ENCODE measurements at regions of chr6 and their contacts with region 1.

Region 1: GRCh38 chr6:53492860-53493634 is 51.9 kb downstream of the GCLC start:
- DNase-seq: no peak
- H3K4me3 Mint-ChIP-seq: no peak overlapping the region
- H3K27ac Mint-ChIP-seq: peak overlapping the region; percentile 65
- H3K4me1 Mint-ChIP-seq: peaks cover 21% of the 10 kb centered on the region
- H3K27me3 Mint-ChIP-seq: peaks cover 5% of the 10 kb centered on the region

Region 2: GRCh38 chr6:52802806-52803205 is 690.2 kb before region 1 on chr6:
- intact Hi-C with region 1: no loop called
- DNase-seq: no peak
- H3K4me3 Mint-ChIP-seq: no peak overlapping the region
- H3K27ac Mint-ChIP-seq: no peak overlapping the region
- H3K4me1 Mint-ChIP-seq: no peaks in the 10 kb centered on the region
- H3K27me3 Mint-ChIP-seq: peaks cover 18% of the 10 kb centered on the region

Region 3: DNA sequence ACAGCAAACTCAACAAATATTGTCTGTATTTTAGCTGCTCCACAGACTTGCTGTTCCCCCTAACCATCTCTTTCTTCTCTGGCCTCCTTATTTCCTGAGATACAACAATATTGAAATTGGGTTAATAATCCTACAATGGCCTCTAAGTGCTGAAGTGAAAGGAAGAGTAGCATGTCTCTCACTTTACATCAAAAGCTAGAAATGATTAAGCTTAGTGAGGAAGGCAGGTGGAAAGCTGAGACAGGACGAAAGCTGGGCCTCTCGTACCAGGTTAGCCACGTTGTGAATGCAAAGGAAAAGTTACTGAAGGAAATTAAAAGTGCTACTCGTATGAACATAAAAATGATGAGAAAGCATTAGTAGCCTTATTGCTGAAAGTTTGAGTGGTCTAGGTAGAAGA is 208.1 kb before region 1 on chr6:
- intact Hi-C with region 1: no loop called
- DNase-seq: no peak
- H3K4me3 Mint-ChIP-seq: no peak overlapping the region
- H3K27ac Mint-ChIP-seq: peak overlapping the region; percentile 31
- H3K4me1 Mint-ChIP-seq: peaks cover 30% of the 10 kb centered on the region
- H3K27me3 Mint-ChIP-seq: no peaks in the 10 kb centered on the region

Region 4: DNA sequence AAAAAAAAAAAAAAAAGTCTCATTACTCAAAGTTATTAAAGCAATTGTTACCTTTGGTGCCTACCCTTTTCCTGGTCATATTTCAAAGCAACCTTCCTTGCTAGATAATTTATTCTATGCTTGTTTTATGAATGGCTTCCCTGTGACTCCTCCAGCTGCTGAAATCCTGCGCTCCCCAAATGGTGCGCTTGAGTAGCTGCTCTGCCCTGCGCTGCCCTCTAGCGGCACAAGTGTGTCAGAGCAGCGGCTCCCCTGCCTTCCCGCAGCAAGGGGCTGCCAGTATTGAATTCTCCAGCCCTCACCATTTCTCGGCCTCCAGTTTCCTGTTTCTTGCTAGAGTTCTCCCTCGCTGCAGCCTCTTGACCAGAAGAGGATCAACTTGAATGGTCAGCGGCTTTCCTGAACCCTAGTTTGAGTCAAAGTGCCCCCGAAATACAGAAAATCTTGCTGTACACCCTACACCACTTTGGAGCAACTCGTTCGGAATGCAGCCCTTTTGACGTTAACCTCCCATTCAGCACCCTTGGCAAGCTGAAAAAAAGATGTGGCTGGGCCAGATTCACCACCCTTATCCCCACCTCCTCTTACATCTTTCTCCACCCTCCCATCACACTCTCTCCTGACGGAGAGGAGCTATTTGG is 232.9 kb after region 1 on chr6:
- intact Hi-C with region 1: loop called (anchors 1 kb)
- DNase-seq: peak; percentile 56
- H3K4me3 Mint-ChIP-seq: no peak overlapping the region
- H3K27ac Mint-ChIP-seq: no peak overlapping the region
- H3K4me1 Mint-ChIP-seq: peaks cover 6% of the 10 kb centered on the region
- H3K27me3 Mint-ChIP-seq: peaks cover 24% of the 10 kb centered on the region

Measured in activated T-helper 2 cell treated with anti-CD3 and anti-CD28 coated beads, Interferon-gamma antibody, Interleukin-2, Interleukin-4, amounts not matched to agents 10 μg/mL and 5 μg/mL and 100 μg/mL, durations not matched to agents 14 hours and 24 hours and 36 hours (primary cell).